ENCODE measurements at regions of chr18 and their contacts with region 1.

Region 1: GRCh38 chr18:3281456-3282400 is 19.8 kb downstream of the MYL12B start:
- DNase-seq: no peak
- ATAC-seq: peak; percentile 90
- H3K4me3 Mint-ChIP-seq: no peak overlapping the region
- H3K27ac Mint-ChIP-seq: no peak overlapping the region
- H3K4me1 Mint-ChIP-seq: peaks cover 10% of the 10 kb centered on the region
- H3K27me3 Mint-ChIP-seq: no peaks in the 10 kb centered on the region

Region 2: GRCh38 chr18:3321133-3321812 is 39.5 kb after region 1 on chr18:
- CTCF ChIA-PET with region 1: interaction called, 3 read pairs
- POLR2A ChIA-PET with region 1: no interaction called
- intact Hi-C with region 1: loop called in 1 of 2 experiments (anchors 1 kb)
- DNase-seq: peak; percentile 54
- ATAC-seq: peak; percentile 38
- H3K4me3 Mint-ChIP-seq: no peak overlapping the region
- H3K27ac Mint-ChIP-seq: no peak overlapping the region
- H3K4me1 Mint-ChIP-seq: peaks cover 23% of the 10 kb centered on the region
- H3K27me3 Mint-ChIP-seq: peaks cover 9% of the 10 kb centered on the region

Region 3: DNA sequence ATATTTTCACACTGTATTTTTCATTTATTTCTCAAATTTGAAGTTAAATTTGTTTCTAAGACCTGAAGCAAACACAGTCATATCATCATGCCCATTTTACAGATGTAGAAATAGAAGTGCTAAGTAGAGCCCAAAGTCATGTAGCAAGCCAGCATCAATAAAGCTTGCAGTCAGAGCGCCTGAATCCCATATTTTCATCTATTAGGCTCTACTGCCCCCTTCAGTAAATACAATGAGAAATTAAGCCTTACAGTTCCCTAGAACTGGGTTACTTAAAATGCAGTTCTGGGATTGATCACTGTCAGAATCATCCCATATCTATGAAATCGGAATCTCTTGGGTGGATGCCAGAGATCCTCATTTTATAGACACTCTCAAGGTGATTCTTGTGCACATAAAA is 588.1 kb after region 1 on chr18:
- CTCF ChIA-PET with region 1: no interaction called
- POLR2A ChIA-PET with region 1: no interaction called
- intact Hi-C with region 1: loop called in 1 of 2 experiments (anchors 5 kb)
- DNase-seq: no peak
- ATAC-seq: no peak
- H3K4me3 Mint-ChIP-seq: no peak overlapping the region
- H3K27ac Mint-ChIP-seq: no peak overlapping the region
- H3K4me1 Mint-ChIP-seq: no peaks in the 10 kb centered on the region
- H3K27me3 Mint-ChIP-seq: peaks cover 11% of the 10 kb centered on the region

Region 4: DNA sequence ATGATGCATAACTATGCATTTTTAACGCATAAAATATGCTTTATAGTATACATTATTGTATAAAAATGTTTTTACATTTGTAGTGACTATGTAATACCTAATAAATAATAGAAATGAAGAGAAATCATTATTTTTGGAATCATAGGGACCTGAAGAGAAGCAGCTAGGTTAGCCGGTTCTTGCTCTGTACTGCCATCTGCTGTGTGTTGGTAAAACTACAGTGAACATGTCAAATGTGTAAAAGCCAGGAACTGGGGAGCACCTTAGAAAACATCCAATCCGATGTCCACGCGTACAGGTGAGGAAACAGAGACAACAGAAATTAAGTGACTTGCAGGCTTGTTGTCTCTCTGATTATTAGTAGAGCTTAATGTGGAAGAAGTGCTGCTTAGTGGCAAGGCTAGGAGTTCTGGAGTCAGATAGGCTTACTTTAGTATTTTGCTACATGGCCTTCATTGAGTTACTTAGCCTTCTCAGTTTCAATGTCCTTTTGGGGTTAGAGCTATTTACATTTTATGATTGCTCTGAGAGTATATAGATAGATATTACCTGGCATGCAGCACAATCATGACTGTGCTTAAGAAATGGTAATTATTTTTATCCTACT is 786.9 kb after region 1 on chr18:
- CTCF ChIA-PET with region 1: no interaction called
- POLR2A ChIA-PET with region 1: no interaction called
- intact Hi-C with region 1: loop called in 1 of 2 experiments (anchors 5 kb)
- DNase-seq: peak; percentile 49
- ATAC-seq: peak; percentile 58
- H3K4me3 Mint-ChIP-seq: no peak overlapping the region
- H3K27ac Mint-ChIP-seq: no peak overlapping the region
- H3K4me1 Mint-ChIP-seq: no peaks in the 10 kb centered on the region
- H3K27me3 Mint-ChIP-seq: peaks cover 12% of the 10 kb centered on the region